Aorta (tissue), 5 donors: ENCODE measurements at regions of chr11 and their contacts with region 1.

Region 1: DNA sequence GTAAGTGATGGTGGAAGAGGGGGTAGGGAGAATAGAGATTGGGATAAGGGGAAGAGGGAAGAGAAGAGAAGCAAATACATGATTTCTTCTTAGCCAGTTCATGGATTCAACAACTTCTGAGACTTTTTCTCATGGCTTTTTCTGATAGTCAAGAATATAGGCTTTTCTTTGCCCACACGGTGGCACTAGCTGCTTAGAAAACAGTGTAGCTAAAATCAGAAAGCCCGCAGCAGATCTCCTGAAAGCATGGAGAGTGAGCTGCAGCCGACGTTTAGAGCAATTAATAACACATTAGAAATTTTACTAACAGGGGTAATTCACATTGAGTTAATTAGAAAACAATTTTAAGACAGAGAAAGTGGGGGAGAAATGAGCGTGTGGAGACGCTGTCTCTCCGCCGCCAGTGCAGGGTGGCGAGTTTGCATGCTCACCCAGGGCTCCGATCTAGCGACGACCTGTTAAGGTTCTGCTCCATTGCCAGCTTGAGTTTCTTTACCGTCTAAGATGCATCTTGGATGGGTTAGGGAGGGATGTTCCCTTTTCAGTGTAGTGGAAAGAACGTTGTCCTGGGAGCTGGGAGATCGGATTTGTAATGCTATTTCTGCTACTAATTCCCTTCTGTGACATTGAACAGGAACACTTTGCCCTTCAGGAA is 3.3 kb upstream of the RAG1 start:
- DNase-seq: peak in 1 of 2 donors; percentile 52
- ATAC-seq: peak; percentile 72
- H3K4me3 ChIP-seq: peak overlapping the region in 1 of 2 donors; percentile 58
- H3K27ac ChIP-seq: no peak overlapping the region
- H3K4me1 ChIP-seq: no peaks in the 10 kb centered on the region
- H3K27me3 ChIP-seq: no peaks in the 10 kb centered on the region

Region 2: GRCh38 chr11:36541001-36541400 is 23.5 kb before region 1 on chr11:
- intact Hi-C with region 1: no loop called
- DNase-seq: peak in 1 of 2 donors; percentile 42
- ATAC-seq: no peak
- H3K4me3 ChIP-seq: no peak overlapping the region
- H3K27ac ChIP-seq: no peak overlapping the region
- H3K4me1 ChIP-seq: no peaks in the 10 kb centered on the region
- H3K27me3 ChIP-seq: peaks cover 0 to 2% of the 10 kb centered on the region in 2 donors

Region 3: DNA sequence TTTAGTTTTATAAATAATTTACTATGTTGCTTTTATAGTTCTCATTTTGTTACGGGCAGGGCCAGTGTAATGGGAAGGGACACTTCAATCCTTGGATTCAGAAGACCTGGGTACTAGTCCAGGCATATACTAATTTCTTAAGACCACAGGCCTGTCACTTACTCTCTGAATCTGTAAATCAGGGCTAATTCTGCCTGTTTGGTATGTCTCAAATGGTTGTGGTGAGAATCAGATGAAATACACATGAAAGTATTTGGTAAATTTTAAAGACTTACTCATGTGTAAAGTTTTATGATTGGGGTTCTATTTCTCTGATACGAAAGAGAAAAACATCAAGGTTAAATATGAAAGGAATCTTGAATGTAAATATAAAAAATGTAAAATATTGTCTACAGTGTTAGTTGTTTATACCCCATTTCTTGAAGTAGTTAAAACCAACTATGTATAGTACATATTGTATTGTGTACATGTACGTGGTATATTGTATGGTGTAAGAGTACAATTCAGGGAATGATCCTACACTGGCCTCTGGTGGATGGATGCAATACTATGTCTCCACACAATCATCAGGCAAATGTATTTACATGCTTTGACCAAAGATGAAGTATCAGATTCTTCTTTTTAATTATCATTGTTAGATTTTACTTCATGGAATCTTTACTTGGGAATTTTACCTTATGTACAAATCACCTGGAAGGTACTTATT is 58.1 kb after region 1 on chr11:
- intact Hi-C with region 1: loop called (anchors 1 to 2 kb)
- DNase-seq: no peak
- ATAC-seq: no peak
- H3K4me3 ChIP-seq: no peak overlapping the region
- H3K27ac ChIP-seq: no peak overlapping the region
- H3K4me1 ChIP-seq: peaks cover 0 to 4% of the 10 kb centered on the region in 2 donors
- H3K27me3 ChIP-seq: no peaks in the 10 kb centered on the region

Region 4: DNA sequence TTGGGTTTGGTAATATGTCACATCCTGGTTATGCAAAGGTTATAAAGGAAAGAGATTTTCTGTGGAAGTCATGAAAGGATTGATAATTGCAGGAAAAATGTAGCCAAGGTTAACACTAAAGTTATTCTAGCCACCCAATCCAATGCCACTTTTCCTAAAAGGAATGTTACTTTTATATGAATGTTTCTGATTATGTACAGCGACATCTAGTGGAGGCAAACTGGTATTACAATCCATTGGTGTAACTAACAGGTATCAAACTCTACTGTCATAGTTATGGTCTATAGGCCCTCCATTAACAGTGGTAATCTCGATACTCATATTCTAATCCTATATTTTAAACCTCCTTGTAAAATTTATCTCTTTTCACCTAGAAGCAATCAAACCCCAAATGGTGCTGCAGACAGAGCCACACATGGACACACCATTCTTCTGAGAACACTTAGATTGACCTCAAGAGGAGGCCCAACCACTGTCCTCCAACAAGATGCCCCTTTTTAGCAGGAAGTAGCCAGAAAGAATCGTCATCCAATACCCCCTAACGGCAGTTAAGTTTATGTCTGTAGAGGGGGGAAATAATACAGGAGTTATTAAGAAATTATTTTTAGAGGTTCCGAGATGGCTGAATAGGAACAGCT is 108.4 kb after region 1 on chr11:
- intact Hi-C with region 1: loop called (anchors 2 kb)
- DNase-seq: no peak
- ATAC-seq: no peak
- H3K4me3 ChIP-seq: no peak overlapping the region
- H3K27ac ChIP-seq: no peak overlapping the region
- H3K4me1 ChIP-seq: no peaks in the 10 kb centered on the region
- H3K27me3 ChIP-seq: no peaks in the 10 kb centered on the region

Region 5: DNA sequence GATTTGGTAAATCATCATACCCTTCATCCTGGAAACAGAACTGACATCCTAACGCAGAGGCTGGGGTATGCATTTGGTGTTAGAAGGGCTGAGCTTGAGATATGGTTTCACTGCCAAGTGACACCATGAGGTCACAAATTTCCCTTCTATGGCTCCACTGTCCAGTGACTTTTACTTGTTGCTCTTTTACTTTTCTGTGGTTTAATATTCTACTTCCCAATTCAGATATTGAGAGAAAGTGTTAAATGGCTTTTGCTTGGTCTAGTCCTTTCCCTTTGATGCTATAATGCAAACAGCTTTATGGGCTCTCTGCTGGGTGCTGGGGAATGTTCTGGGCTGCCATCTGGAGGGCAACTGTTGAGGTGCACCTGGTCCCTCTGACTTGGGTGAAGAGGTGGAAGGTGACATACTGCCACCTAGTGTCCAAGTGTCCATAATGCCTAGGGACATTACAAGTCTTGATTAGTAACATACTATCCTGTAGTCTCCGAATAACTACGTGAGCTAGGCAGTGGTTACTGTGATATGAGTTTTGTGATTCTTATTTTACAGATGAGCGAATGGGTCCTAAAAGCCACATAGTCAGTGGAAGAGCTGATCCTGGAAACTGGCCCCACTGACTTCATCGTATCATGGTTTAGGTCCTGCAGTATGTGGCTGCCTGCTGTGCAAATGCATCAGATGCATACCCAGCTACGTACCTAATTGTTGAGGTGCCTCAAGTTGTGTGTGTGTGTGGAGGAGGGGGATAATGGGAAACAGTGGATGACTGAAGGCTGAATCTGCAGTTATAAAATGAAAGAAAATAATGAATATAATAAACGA is 182.6 kb after region 1 on chr11:
- intact Hi-C with region 1: loop called (anchors 2 to 10 kb)
- DNase-seq: peak; percentile 88
- ATAC-seq: peak; percentile 90
- H3K4me3 ChIP-seq: no peak overlapping the region
- H3K27ac ChIP-seq: no peak overlapping the region
- H3K4me1 ChIP-seq: no peaks in the 10 kb centered on the region
- H3K27me3 ChIP-seq: no peaks in the 10 kb centered on the region